ENCODE measurements at regions of chr12 and their contacts with region 1.

Region 1: GRCh38 chr12:9331218-9331626 is 123.0 kb upstream of the PZP start:
- DNase-seq: peak; percentile 65
- ATAC-seq: peak; percentile 96
- H3K4me3 Mint-ChIP-seq: no peak overlapping the region
- H3K27ac Mint-ChIP-seq: no peak overlapping the region
- H3K4me1 Mint-ChIP-seq: peaks cover 12% of the 10 kb centered on the region
- H3K27me3 Mint-ChIP-seq: no peaks in the 10 kb centered on the region
- CTCF ChIP-seq: peak; percentile 86

Region 2: GRCh38 chr12:9273276-9273675 is 57.9 kb before region 1 on chr12:
- CTCF ChIA-PET with region 1: no interaction called
- POLR2A ChIA-PET with region 1: no interaction called
- intact Hi-C with region 1: no loop called
- DNase-seq: no peak
- ATAC-seq: no peak
- H3K4me3 Mint-ChIP-seq: no peak overlapping the region
- H3K27ac Mint-ChIP-seq: no peak overlapping the region
- H3K4me1 Mint-ChIP-seq: no peaks in the 10 kb centered on the region
- H3K27me3 Mint-ChIP-seq: peaks cover 15% of the 10 kb centered on the region
- CTCF ChIP-seq: no peak

Region 3: DNA sequence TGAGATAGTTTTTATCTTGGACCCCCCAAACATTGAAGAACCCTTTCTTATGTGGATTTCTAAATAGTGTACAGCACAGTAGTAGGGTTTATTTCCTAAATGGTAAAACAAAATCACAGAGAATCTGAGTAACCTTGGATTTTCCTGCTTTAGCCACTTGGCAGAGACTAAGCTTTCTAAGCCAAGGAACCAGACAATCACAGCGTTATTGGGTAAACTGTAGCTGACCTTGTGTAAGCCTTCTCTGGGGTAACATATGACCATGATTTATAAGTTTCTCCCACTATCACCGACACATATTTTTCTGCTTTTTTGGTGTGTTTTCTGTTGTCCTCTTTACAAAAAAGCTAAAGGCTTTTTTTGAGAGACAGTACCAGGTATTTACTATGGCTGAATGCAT is 13.3 kb after region 1 on chr12:
- CTCF ChIA-PET with region 1: interaction called, 14 read pairs
- POLR2A ChIA-PET with region 1: no interaction called
- intact Hi-C with region 1: no loop called
- DNase-seq: no peak
- ATAC-seq: no peak
- H3K4me3 Mint-ChIP-seq: no peak overlapping the region
- H3K27ac Mint-ChIP-seq: no peak overlapping the region
- H3K4me1 Mint-ChIP-seq: no peaks in the 10 kb centered on the region
- H3K27me3 Mint-ChIP-seq: no peaks in the 10 kb centered on the region
- CTCF ChIP-seq: no peak

Region 4: GRCh38 chr12:9634177-9634803 is 303.1 kb after region 1 on chr12:
- CTCF ChIA-PET with region 1: interaction called, 4 read pairs
- POLR2A ChIA-PET with region 1: interaction called, 3 read pairs
- intact Hi-C with region 1: loop called (anchors 1 kb)
- DNase-seq: no peak
- ATAC-seq: peak; percentile 80
- H3K4me3 Mint-ChIP-seq: peak overlapping the region; percentile 66
- H3K27ac Mint-ChIP-seq: peak overlapping the region; percentile 86
- H3K4me1 Mint-ChIP-seq: peaks cover 60% of the 10 kb centered on the region
- H3K27me3 Mint-ChIP-seq: no peaks in the 10 kb centered on the region
- CTCF ChIP-seq: peak; percentile 57

Region 5: GRCh38 chr12:9707864-9708808 is 376.9 kb after region 1 on chr12:
- CTCF ChIA-PET with region 1: interaction called, 13 read pairs
- POLR2A ChIA-PET with region 1: interaction called, 4 read pairs
- intact Hi-C with region 1: loop called (anchors 5 kb)
- DNase-seq: no peak
- ATAC-seq: peak; percentile 50
- H3K4me3 Mint-ChIP-seq: peak overlapping the region; percentile 59
- H3K27ac Mint-ChIP-seq: peak overlapping the region; percentile 93
- H3K4me1 Mint-ChIP-seq: peaks cover 89% of the 10 kb centered on the region
- H3K27me3 Mint-ChIP-seq: no peaks in the 10 kb centered on the region
- CTCF ChIP-seq: peak; percentile 23

Region 6: DNA sequence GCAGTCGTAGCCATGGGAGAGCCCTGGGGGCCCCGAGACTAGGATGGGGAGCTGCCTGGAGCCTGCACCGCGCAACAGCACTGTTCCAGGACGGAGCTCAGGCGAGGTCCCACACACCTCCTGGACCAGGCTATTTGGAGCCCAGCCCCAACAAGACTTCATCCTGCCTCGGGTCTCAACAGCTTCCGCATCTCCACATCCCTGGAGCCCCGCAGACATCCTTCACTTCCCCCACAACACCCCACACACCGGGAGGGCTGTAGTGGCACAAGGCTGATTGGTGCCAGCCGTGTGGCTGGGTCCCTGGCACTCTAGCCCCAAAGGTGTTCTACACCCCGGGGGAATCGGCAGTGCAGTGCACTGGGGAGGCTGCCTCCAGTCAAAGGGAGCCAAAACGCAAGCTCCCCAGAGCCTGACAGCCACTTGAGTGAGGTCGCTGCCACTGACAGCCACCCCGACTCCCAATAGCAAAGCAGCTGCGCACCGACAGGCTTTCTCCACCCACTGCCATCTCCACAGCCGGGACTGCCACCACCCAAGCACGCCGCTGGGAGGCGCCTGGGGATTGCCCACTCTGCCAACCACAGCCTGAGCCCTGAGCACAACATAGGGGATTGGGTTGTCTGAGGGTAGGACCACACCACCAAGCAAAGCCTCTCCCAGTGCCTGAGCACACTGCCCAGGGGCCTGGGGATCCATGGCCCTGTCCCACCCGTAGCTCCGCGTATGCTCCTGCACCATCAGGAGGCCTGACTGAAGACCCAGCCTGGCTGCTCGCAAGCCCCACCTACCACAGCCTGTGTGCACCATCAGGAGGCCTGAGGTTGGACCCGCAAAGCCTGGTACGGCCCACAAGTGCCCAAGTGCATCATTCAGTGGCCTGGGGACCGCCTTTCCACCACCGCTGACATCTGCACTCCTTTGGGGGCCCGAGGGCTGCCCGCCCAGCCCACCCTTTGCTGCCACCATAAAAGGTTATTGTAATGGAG is 482.9 kb after region 1 on chr12:
- CTCF ChIA-PET with region 1: interaction called, 3 read pairs
- POLR2A ChIA-PET with region 1: no interaction called
- intact Hi-C with region 1: loop called (anchors 5 kb)
- DNase-seq: peak; percentile 80
- ATAC-seq: peak; percentile 97
- H3K4me3 Mint-ChIP-seq: peak overlapping the region; percentile 73
- H3K27ac Mint-ChIP-seq: no peak overlapping the region
- H3K4me1 Mint-ChIP-seq: peaks cover 20% of the 10 kb centered on the region
- H3K27me3 Mint-ChIP-seq: peaks cover 18% of the 10 kb centered on the region
- CTCF ChIP-seq: peak; percentile 47

Region 7: DNA sequence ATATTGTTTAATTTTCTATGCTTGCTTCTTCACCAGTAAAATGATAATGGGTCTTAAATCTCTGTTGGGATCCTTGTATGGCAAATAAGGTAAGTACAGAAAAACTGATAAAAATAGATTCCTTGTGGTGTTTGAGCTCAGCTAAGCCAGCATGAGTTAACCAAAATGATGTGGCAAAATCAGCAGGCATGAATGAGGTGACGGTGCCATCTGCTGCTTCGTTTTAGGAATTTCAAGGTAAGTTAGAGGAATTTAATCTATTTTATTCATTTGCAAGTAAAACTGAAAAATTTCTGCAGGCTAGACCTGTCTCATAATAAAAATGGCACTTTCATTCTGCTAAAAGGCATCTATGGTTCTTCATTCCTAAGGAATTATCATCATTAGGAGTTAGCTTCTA is 808.8 kb after region 1 on chr12:
- CTCF ChIA-PET with region 1: interaction called, 4 read pairs
- POLR2A ChIA-PET with region 1: no interaction called
- intact Hi-C with region 1: loop called (anchors 2 kb)
- DNase-seq: no peak
- ATAC-seq: peak; percentile 60
- H3K4me3 Mint-ChIP-seq: no peak overlapping the region
- H3K27ac Mint-ChIP-seq: no peak overlapping the region
- H3K4me1 Mint-ChIP-seq: no peaks in the 10 kb centered on the region
- H3K27me3 Mint-ChIP-seq: peaks cover 27% of the 10 kb centered on the region
- CTCF ChIP-seq: no peak

Measured in activated B cell treated with CpG ODN at 0.5 μM for 24 hours (primary cell).